Ascending aorta (tissue), 2 donors: ENCODE measurements at regions of chr2 and their contacts with region 1.

Region 1: GRCh38 chr2:135052042-135052876 is at the start of gene RAB3GAP1:
- DNase-seq: peak; percentile 33 to 90
- H3K4me3 ChIP-seq: peak within 1 kb of the TSS; percentile 71 to 75
- H3K27ac ChIP-seq: peak within 1 kb of the TSS; percentile 96 to 97
- H3K4me1 ChIP-seq: peaks cover 5 to 35% of the 10 kb centered on the region in 2 donors
- H3K27me3 ChIP-seq: no peaks in the 10 kb centered on the region
- CTCF ChIP-seq: no peak
- total RNA-seq, gene RAB3GAP1: 14.8 TPM

Region 2: GRCh38 chr2:134918526-134919340 is 133.5 kb before region 1 on chr2 and contains the start of gene CCNT2:
- intact Hi-C with region 1: loop called (anchors 5 kb)
- DNase-seq: peak; percentile 97 to 99
- H3K4me3 ChIP-seq: peak within 1 kb of the TSS; percentile 83 to 88
- H3K27ac ChIP-seq: peak within 1 kb of the TSS; percentile 96 to 98
- H3K4me1 ChIP-seq: peaks cover 5 to 25% of the 10 kb centered on the region in 2 donors
- H3K27me3 ChIP-seq: no peaks in the 10 kb centered on the region
- CTCF ChIP-seq: no peak
- total RNA-seq, gene CCNT2: 14.2 TPM

Region 3: DNA sequence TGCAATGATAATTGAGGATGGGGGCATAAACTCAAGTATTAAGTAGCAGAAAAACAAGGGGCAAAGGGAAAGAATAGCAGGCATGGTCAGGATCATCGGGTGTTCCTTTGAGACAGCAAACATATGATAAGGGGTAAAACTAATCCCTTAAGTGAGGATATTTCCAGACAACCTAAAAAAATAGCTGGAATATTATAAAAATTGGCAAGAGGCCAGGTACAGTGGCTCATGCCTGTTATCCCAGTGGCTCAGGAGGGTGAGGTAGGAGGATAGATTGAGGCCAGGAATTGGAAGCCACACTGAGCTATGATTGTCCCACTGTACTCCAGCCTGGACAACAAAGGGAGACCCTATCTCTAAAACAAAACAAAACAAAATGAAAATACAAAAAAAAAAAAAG is 339.7 kb after region 1 on chr2:
- intact Hi-C with region 1: no loop called
- DNase-seq: no peak
- H3K4me3 ChIP-seq: no peak overlapping the region
- H3K27ac ChIP-seq: no peak overlapping the region
- H3K4me1 ChIP-seq: no peaks in the 10 kb centered on the region
- H3K27me3 ChIP-seq: no peaks in the 10 kb centered on the region
- CTCF ChIP-seq: no peak

Region 4: GRCh38 chr2:135531231-135532228 is 479.3 kb after region 1 on chr2 and contains the start of gene R3HDM1:
- intact Hi-C with region 1: loop called (anchors 1 kb)
- DNase-seq: peak; percentile 97 to 100
- H3K4me3 ChIP-seq: peak within 1 kb of the TSS; percentile 78 to 82
- H3K27ac ChIP-seq: peak within 1 kb of the TSS; percentile 86 to 95
- H3K4me1 ChIP-seq: peaks cover 0 to 10% of the 10 kb centered on the region in 2 donors
- H3K27me3 ChIP-seq: no peaks in the 10 kb centered on the region
- CTCF ChIP-seq: peak in 1 of 3 experiments; percentile 4
- total RNA-seq, gene R3HDM1: 5.0 TPM

Region 5: GRCh38 chr2:135741395-135742324 is 689.4 kb after region 1 on chr2 and contains the start of gene UBXN4:
- intact Hi-C with region 1: loop called (anchors 2 kb)
- DNase-seq: peak; percentile 96 to 99
- H3K4me3 ChIP-seq: peak within 1 kb of the TSS; percentile 81 to 92
- H3K27ac ChIP-seq: peak within 1 kb of the TSS; percentile 99
- H3K4me1 ChIP-seq: peaks cover 0 to 17% of the 10 kb centered on the region in 2 donors
- H3K27me3 ChIP-seq: no peaks in the 10 kb centered on the region
- CTCF ChIP-seq: peak in 2 of 3 experiments; percentile 21 to 37
- total RNA-seq, gene UBXN4: 14.8 TPM

Region 6: GRCh38 chr2:135876066-135876711 is 823.9 kb after region 1 on chr2 and contains the start of gene MCM6:
- intact Hi-C with region 1: loop called (anchors 10 kb)
- DNase-seq: peak; percentile 92 to 98
- H3K4me3 ChIP-seq: peak within 1 kb of the TSS; percentile 82 to 83
- H3K27ac ChIP-seq: peak within 1 kb of the TSS; percentile 87 to 91
- H3K4me1 ChIP-seq: peaks cover 0 to 5% of the 10 kb centered on the region in 2 donors
- H3K27me3 ChIP-seq: no peaks in the 10 kb centered on the region
- CTCF ChIP-seq: no peak
- total RNA-seq, gene MCM6: 62.5 TPM